ENCODE measurements at regions of chr4 and their contacts with region 1.

Region 1: DNA sequence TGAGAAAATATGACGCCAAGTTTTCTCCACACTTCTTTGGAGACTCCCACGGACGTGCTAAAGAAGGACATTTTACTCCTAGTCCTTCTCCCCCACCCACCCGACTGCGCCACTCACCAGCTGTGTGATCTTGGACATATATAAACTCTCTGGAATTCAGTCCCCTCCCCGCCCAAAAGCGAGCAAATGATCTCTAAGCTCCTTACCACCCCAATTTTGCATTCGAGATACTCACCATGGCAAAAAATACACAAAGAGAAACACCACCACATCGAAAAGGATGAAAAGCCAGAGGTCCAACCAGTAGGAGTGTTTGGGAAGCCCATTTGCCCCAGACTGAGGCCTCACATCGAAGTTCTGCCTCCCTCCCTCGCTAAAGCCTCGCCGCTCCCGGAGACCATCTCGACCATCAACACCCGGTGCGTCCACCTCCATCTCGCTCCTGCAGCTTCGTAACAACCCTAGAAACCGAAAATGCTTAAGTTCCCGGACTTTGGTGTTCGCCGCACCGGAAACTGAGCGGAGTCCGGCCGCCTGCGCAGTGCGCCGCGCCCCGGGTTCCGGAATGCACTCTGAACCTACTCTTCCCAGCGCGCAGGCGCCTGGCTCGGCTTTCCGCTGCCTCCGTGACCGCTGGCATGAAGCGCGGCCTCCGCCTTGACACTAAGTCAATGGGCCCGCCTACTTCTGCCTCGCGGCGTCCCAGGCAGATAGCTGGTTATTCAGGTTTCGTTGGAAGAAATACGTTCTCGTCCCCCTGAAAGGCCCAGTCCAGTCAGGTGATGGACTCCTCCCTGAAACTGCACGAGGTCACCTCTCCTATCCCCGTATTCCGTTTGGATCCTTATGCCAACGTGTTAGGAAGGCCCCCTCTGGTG is 21.6 kb downstream of the FABP2 start:
- DNase-seq: peak; percentile 63
- H3K4me3 ChIP-seq: peak overlapping the region; percentile 89
- CTCF ChIP-seq: no peak

Region 2: DNA sequence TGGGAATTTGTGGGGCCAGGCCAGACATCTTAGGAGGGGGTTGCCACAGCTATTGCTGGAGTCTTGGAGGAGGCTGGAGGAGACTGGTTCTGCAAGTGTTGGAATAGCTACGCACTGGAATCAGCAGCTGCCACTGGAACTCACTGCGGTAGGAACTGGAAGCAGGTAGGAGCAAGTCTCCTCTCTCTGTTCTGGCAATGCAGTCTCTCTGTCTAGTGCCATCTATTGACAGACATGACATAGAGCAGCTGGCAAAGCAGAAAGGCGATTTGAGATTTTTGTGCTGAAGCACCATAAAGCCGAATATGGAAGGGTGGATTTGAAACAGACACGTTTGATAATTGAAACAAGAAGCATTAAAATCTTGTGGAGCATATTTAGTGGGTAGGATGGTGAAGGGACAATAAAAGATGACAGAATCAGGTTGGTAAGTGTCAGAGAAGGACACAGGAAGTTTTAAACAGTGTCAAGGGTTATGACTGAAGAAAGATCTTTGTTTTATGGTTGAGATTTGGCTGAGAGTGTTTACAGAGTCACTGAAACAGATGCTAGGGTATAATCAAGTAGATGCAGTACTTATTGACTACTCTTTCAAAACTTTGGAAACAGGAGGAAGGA is 435.1 kb before region 1 on chr4:
- CTCF ChIA-PET with region 1: no interaction called
- POLR2A ChIA-PET with region 1: no interaction called
- DNase-seq: no peak
- H3K4me3 ChIP-seq: no peak overlapping the region
- CTCF ChIP-seq: peak; percentile 70

Region 3: DNA sequence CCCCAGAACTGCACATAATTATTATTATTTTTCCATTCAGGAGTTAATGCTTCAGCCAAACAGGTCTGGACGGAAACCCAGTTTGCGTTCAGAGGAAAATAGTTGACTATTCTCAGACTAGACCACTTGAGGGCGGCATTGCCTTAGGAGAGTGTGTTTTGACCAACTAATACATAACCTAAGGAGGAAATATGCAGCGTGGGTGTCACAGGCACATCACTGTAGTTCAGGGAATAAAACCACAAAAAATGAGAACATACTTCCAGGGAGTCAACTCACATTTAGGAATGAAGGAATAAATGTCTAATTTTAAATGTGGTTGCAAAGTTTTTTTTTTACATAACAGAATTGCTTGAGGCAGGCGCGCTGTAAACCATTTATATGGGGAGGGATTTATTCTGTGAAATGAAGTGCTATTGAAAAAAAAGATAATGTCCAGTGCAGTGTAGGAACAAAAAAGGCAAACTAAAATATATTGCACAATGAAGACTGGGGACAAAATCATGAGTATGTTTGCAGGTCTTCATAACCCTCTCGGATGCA is 318.4 kb before region 1 on chr4:
- CTCF ChIA-PET with region 1: interaction called, 21 read pairs
- POLR2A ChIA-PET with region 1: interaction called, 5 read pairs
- DNase-seq: peak; percentile 96
- H3K4me3 ChIP-seq: no peak overlapping the region
- CTCF ChIP-seq: peak; percentile 59

Region 4: GRCh38 chr4:119087121-119087520 is 213.2 kb before region 1 on chr4:
- CTCF ChIA-PET with region 1: interaction called, 12 read pairs
- POLR2A ChIA-PET with region 1: no interaction called
- DNase-seq: no peak
- H3K4me3 ChIP-seq: no peak overlapping the region
- CTCF ChIP-seq: peak; percentile 2

Region 5: DNA sequence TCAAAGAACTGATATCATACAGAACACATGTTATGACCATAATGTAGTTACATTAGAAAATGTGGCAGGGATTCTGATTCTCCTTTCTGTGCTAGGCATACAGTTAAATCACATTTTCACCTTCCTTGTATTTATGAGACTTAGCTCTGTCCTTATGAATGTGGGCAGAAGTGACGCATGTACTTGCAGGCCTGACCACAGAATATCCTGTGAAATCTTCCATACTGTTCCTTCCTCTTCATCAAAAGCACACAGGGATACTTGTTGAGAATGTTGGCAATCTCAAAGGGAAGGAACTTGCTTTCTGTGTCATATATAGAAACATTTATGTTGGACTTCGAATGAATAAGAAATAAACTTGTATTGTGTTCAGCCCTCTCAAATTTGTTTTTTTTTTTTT is 181.9 kb before region 1 on chr4:
- CTCF ChIA-PET with region 1: no interaction called
- POLR2A ChIA-PET with region 1: no interaction called
- DNase-seq: no peak
- H3K4me3 ChIP-seq: no peak overlapping the region
- CTCF ChIP-seq: no peak

Region 6: GRCh38 chr4:119212234-119212963 is 87.9 kb before region 1 on chr4 and contains the start of gene USP53:
- CTCF ChIA-PET with region 1: interaction called, 4 read pairs
- POLR2A ChIA-PET with region 1: interaction called, 10 read pairs
- DNase-seq: peak; percentile 82
- H3K4me3 ChIP-seq: peak within 1 kb of the TSS; percentile 91
- CTCF ChIP-seq: no peak

Region 7: DNA sequence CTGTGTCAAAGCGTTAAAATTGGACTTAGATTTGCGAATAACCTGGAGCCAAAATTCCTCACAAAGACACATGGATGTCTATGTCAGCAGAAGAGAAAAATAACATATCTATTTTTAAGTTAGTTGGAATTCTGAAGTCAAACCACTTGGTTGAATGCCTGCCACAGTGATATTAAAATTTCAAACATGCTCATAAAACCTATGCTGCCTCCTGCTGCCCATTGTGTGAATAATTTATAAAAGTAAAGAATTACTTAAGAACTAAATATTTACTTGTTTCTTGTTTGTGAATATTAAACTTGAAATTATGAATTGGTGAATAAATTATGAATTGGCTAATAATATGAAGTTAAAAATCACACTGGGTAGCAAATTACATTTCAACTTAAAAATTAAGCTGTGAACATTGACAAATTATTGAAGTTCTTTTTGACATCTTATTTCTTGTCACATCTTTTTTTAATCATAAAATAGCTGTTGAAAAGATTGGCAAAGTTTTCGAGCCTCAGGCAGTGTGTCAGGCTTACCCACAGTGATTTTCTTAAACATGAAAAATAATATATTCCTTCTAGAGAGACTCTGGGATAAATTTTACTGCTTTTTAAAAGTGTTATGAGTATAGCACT is 13.8 kb before region 1 on chr4:
- CTCF ChIA-PET with region 1: interaction called, 18 read pairs
- POLR2A ChIA-PET with region 1: no interaction called
- DNase-seq: peak; percentile 50
- H3K4me3 ChIP-seq: no peak overlapping the region
- CTCF ChIP-seq: peak; percentile 25

Region 8: DNA sequence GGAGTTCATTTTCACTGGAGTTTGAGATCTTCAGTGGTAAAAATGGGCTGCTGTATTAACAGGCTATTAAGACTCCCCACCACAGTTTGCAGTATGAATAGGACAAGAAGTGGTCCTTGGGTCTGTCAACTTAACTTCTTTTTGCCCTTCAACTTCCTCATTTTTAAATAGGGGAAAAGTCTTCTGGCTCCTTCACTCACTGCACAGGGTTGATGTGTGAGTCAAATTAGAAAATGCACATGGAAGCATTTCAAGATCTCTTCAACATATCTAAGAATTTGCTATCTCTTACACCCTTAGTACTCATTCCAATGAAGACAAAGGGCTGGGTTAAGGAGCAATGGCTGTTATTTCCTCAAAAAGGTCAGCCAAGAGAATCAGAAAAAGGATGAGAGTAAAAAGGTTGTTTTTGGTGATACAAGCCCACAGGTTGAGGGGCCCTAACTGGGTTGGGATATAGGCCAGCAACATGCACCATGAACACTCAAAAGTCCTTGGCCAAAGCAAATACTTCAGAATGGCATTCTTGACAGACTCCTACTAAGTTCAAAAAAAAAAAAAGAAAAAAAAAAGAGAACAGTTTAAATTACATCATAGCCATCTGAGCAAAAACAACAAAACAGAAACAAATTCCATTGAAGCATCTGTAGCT is 314.9 kb after region 1 on chr4:
- CTCF ChIA-PET with region 1: no interaction called
- POLR2A ChIA-PET with region 1: no interaction called
- DNase-seq: no peak
- H3K4me3 ChIP-seq: no peak overlapping the region
- CTCF ChIP-seq: no peak

Region 9: GRCh38 chr4:119810001-119810400 is 509.7 kb after region 1 on chr4:
- CTCF ChIA-PET with region 1: no interaction called
- POLR2A ChIA-PET with region 1: no interaction called
- DNase-seq: no peak
- H3K4me3 ChIP-seq: no peak overlapping the region
- CTCF ChIP-seq: no peak